Dorsolateral prefrontal cortex (tissue), 120 donors: ENCODE measurements at regions of chr2 and their contacts with region 1.

Region 1: DNA sequence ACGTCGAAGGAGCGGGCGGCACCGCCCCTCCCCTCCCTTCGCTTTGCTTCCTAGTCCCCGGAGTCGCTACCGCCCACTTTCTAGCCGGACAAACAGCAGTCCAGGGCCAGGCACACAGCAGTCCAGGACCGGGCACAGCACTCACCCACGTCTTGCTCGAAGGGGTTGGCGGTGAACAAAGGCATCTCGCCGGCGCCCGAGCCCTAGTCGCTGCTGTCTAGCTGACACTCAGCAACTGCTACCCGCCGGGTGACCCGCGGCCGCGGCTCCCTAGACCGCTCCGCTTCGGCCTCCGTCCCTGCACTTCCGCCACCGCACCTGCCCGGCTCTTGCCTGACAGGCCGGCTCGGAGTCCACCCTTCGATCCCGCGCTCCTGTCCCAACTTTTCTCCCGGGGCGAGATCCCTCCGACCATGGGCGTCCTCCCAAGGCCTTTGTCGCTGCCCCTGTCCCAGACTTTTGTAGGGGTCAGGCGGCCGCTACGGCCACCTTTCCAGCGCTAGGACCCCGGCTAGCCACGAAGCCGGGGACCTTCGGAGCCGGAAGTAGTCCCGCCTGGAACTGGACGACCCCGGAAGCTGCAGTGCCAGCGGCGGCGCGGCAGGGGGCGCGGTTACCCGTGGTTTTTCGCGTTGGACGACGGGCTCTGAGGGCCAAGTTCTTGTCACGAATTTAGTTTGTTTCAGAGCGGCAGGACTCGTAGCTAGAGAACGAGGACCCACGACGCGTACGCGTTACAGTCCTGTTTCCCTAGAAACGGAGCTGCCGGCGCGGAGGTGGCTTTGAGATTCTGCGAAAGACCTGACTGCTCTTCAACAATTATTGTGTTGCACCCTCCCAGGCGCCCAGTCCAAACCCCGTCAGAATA is at the start of gene STAM2:
- DNase-seq: peak; percentile 83 to 93 (median 88)
- H3K4me3 ChIP-seq: peak within 1 kb of the TSS; percentile 69 to 98 (median 85)
- H3K27ac ChIP-seq: peak within 1 kb of the TSS; percentile 88 to 100 (median 97)
- H3K27me3 ChIP-seq: no peaks in the 10 kb centered on the region
- CTCF ChIP-seq: peak; percentile 89 to 99 (median 97)
- total RNA-seq, gene STAM2: 25.9 to 44.5 (median 34.8) TPM

Region 2: GRCh38 chr2:152635635-152636298 is 460.1 kb after region 1 on chr2:
- intact Hi-C with region 1: loop called in 1 of 2 experiments (anchors 5 kb)
- DNase-seq: peak in 9 of 10 donors; percentile 31 to 76 (median 63)
- H3K4me3 ChIP-seq: no peak overlapping the region
- H3K27ac ChIP-seq: peak overlapping the region in 46 of 59 donors; percentile 1 to 73 (median 55)
- H3K27me3 ChIP-seq: no peaks in the 10 kb centered on the region
- CTCF ChIP-seq: peak; percentile 70 to 95 (median 87)

Region 3: GRCh38 chr2:152717228-152718075 is 541.8 kb after region 1 on chr2 and contains the start of gene PRPF40A:
- intact Hi-C with region 1: loop called (anchors 1 kb)
- DNase-seq: peak; percentile 99 to 100 (median 99)
- H3K4me3 ChIP-seq: peak within 1 kb of the TSS; percentile 71 to 99 (median 93)
- H3K27ac ChIP-seq: peak within 1 kb of the TSS; percentile 87 to 100 (median 99)
- H3K27me3 ChIP-seq: no peaks in the 10 kb centered on the region
- CTCF ChIP-seq: peak in 15 of 56 donors; percentile 5 to 40 (median 17)
- total RNA-seq, gene PRPF40A: 35.0 to 69.8 (median 50.7) TPM

Region 4: DNA sequence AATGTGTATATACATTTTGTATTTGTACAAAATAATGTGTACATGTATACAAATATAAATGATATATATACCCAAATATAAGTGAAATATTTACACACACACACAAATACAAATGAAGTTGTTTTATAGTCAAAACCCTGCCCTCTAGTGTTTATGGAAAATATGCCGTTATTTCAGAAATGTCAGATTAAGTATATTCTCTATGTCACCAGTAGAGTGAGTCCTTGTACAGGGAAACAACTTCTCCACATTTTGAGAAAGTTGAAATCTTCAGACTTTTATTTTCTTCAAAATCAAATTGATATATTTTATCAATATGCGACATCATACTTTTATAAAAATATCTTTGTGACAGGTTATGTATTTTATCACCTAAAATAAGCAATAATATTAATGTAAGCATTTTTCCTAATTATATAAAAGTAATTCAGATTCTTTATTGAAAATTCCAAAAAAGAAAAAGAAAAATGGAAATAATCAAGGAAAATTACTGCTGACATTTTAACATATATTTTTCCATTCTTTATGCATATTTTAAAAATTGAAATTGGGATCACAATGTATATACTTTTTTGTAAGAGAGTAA is 565.1 kb after region 1 on chr2:
- intact Hi-C with region 1: loop called in 1 of 2 experiments (anchors 1 kb)
- DNase-seq: no peak
- H3K4me3 ChIP-seq: no peak overlapping the region
- H3K27ac ChIP-seq: no peak overlapping the region
- H3K27me3 ChIP-seq: no peaks in the 10 kb centered on the region
- CTCF ChIP-seq: peak; percentile 75 to 97 (median 90)

Region 5: DNA sequence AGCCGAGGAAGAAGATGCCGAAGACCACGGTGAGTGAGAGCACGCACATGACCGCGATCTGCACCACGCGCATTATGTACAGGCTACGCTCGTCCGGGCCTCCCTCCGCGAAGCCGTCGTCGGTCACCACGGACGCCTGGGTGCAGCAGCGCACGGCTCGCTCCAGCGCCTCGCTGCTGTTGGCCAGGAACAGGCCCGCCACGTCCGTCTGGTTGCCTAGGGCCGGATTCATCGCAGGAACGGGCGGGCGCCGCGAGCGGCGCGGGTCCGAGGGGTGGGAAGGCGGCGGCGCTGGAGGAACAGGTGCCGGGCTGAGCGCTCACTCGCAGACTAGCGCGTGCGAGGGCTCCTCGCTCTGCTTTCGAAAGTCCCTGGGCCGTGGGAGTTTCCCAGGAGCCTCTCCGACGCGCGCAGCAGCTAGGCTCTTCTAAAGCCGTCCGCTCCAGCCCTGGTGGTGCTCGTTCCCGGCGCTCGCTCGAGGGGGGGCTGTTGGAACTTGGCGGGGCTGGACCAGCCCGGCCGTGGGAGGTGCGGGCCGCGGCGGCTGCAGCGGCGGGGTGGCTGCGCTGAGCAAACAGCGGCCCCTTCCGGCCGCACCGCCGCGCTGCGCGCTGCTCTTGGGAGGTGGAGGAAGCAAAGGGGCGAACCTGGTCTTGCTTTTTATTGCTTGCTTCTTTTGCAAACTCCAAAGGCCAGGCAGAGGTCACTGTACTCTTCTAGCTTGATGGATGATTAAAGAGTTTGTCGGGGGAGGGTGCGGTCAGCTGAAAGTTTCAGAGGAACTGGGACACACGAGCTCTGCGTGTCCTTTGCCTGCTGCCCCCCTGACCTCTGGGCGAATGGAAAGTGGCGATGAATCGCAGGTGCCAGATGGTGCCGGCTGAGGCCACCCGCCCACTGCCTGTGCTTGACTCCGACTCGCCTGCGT is 1302.9 kb after region 1 on chr2 and contains the start of gene RPRM:
- intact Hi-C with region 1: loop called in 1 of 2 experiments (anchors 10 kb)
- DNase-seq: peak; percentile 46 to 83 (median 64)
- H3K4me3 ChIP-seq: peak within 1 kb of the TSS; percentile 35 to 75 (median 59)
- H3K27ac ChIP-seq: peak within 1 kb of the TSS in 13 of 59 donors; percentile 10 to 61 (median 34)
- H3K27me3 ChIP-seq: peaks cover 0 to 78% (median 45%) of the 10 kb centered on the region in 45 donors
- CTCF ChIP-seq: peak; percentile 54 to 97 (median 89)
- total RNA-seq, gene RPRM: 1.8 to 28.0 (median 10.7) TPM